SK-N-SH (cell line): ENCODE measurements at regions of chr14 and their contacts with region 1.

Region 1: DNA sequence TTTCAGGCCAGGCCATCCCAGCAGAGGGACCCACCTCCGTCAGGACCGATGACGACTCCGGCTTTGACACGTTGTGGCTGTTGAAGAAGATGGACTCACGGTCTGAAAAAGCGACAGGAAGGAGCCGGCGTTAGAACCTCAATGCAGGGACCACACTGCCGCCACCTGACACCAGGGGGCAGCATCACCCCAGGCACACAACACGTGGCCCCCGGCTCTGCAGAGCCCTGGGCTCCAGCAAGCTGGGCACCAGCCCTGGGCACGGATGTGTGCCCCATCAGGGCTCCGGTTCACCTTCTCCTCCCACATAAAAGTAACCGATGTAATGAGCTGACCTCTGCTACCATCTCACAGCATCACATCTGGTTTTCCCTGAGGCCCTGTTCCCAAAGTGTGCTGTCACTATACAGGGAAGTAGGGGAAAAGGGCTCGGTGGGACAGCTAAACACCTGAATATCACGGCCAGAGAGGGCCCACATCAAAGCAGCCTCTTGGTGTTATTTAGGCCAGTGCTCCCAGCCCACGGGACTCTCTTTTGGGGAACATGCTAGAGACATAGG is 29.0 kb downstream of the CHGA start:
- DNase-seq: peak; percentile 93
- H3K4me3 ChIP-seq: no peak overlapping the region; a peak in 1 of 4 replicates
- H3K27ac ChIP-seq: peak overlapping the region in 1 of 2 experiments; percentile 54; a peak in 1 of 4 replicates
- H3K4me1 ChIP-seq: peaks cover 0 to 49% of the 10 kb centered on the region in 2 experiments; a peak in 1 of 4 replicates
- H3K27me3 ChIP-seq: no peaks in the 10 kb centered on the region
- CTCF ChIP-seq: peak; percentile 92
- EP300 ChIP-seq: no peak
- RAD21 ChIP-seq: peak; percentile 95

Region 2: GRCh38 chr14:92902726-92903125 is 49.3 kb before region 1 on chr14:
- CTCF ChIA-PET with region 1: no interaction called
- POLR2A ChIA-PET with region 1: no interaction called
- DNase-seq: no peak
- H3K4me3 ChIP-seq: no peak overlapping the region
- H3K27ac ChIP-seq: no peak overlapping the region
- H3K4me1 ChIP-seq: peaks cover 0 to 16% of the 10 kb centered on the region in 2 experiments; a peak in 1 of 4 replicates
- H3K27me3 ChIP-seq: no peaks in the 10 kb centered on the region
- CTCF ChIP-seq: no peak
- EP300 ChIP-seq: no peak
- RAD21 ChIP-seq: no peak

Region 3: GRCh38 chr14:92937051-92937937 is 14.7 kb before region 1 on chr14:
- CTCF ChIA-PET with region 1: interaction called, 16 read pairs
- POLR2A ChIA-PET with region 1: interaction called, 57 read pairs
- DNase-seq: no peak
- H3K4me3 ChIP-seq: no peak overlapping the region
- H3K27ac ChIP-seq: peak overlapping the region in 1 of 2 experiments; percentile 60; a peak in 2 of 4 replicates
- H3K4me1 ChIP-seq: peaks cover 0 to 41% of the 10 kb centered on the region in 2 experiments; a peak in 1 of 4 replicates
- H3K27me3 ChIP-seq: no peaks in the 10 kb centered on the region
- CTCF ChIP-seq: no peak
- EP300 ChIP-seq: no peak
- RAD21 ChIP-seq: no peak

Region 4: GRCh38 chr14:93007225-93007997 is 55.4 kb after region 1 on chr14:
- CTCF ChIA-PET with region 1: interaction called, 24 read pairs
- POLR2A ChIA-PET with region 1: interaction called, 5 read pairs
- DNase-seq: no peak
- H3K4me3 ChIP-seq: no peak overlapping the region
- H3K27ac ChIP-seq: peak overlapping the region in 1 of 2 experiments; percentile 98; a peak in 2 of 4 replicates
- H3K4me1 ChIP-seq: peaks cover 19 to 100% of the 10 kb centered on the region in 2 experiments
- H3K27me3 ChIP-seq: no peaks in the 10 kb centered on the region
- CTCF ChIP-seq: no peak
- EP300 ChIP-seq: no peak
- RAD21 ChIP-seq: no peak

Region 5: DNA sequence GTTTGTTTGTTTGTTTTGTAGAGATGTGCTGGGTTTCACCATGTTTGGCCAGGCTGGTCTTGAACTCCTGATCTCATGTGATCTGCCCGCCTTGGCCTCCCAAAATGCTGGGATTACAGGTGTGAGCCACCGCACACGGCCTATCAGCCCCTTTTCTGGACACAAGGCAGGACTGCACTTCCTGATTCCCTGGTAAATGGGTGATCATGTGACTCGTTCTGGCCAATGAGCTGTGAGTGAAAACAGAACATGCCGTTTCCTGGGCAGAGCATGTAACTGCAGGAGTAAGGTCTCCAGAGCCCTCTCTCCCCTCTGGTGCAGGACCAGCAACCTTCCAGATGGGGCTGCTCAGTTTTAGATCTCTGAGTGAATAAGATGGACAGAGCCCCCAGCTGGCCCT is 71.0 kb after region 1 on chr14:
- CTCF ChIA-PET with region 1: interaction called, 12 read pairs
- POLR2A ChIA-PET with region 1: no interaction called
- DNase-seq: peak; percentile 83
- H3K4me3 ChIP-seq: no peak overlapping the region
- H3K27ac ChIP-seq: peak overlapping the region in 1 of 2 experiments; percentile 88; a peak in 2 of 4 replicates
- H3K4me1 ChIP-seq: peaks cover 0 to 54% of the 10 kb centered on the region in 2 experiments; a peak in 1 of 4 replicates
- H3K27me3 ChIP-seq: no peaks in the 10 kb centered on the region
- CTCF ChIP-seq: no peak
- EP300 ChIP-seq: no peak
- RAD21 ChIP-seq: peak; percentile 35; the same call in 1 of the 2 replicates

Region 6: GRCh38 chr14:93132470-93133065 is 180.6 kb after region 1 on chr14:
- CTCF ChIA-PET with region 1: interaction called, 55 read pairs
- POLR2A ChIA-PET with region 1: no interaction called
- DNase-seq: peak; percentile 63
- H3K4me3 ChIP-seq: no peak overlapping the region
- H3K27ac ChIP-seq: no peak overlapping the region
- H3K4me1 ChIP-seq: no peaks in the 10 kb centered on the region; a peak in 1 of 4 replicates
- H3K27me3 ChIP-seq: no peaks in the 10 kb centered on the region
- CTCF ChIP-seq: peak; percentile 54
- EP300 ChIP-seq: no peak
- RAD21 ChIP-seq: peak; percentile 54

Region 7: DNA sequence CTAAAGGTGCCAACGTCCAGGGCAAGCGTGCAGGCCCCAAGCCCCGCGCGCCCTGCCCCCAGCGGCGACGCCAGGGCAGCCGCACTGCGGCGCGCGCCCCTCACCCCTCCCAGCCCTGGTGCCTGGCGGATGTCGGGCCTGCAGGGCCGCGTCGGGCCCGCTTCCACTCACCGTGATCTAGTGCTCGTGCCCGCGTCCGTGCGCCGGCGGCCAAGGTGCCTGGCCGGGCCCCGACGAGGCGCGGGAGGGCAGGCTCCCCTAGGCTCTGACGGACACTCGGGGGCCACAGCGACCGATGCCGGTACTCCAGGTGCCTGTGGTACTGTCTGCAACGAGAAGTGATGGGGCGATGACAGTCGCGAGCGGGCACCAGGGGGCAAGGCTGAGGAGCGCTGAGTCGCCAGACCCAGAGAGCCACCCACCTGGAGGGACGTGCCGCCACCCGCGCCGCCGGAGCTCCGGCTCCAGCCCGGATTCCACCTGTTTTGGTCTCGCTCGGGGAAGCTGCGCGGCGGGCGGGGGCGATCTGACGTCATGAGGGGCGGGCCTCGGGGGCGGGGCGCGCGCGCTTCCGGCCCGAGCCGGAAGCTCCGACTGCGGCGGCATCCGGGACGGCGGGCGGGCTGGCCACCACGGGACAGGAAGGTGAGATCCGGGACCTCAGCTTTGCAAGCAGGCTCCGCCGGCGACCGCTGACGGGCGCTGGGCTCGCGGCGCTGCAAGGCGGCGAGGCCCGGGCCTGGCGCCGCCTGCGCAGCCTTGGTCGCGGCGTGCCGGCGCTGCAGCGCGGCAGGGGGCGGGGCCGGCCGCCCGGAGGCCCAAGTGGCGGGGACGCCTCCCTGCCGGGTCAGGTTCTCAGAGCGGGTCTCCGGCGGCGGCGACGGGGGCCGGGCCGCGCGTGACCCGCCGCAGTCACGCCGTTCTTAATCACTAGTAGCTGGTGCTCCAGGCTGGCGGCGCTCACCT is 232.7 kb after region 1 on chr14 and contains the starts of genes LYSET and MOAP1:
- CTCF ChIA-PET with region 1: interaction called, 13 read pairs
- POLR2A ChIA-PET with region 1: interaction called, 5 read pairs
- DNase-seq: peak; percentile 98
- H3K4me3 ChIP-seq: peak within 1 kb of the TSS; percentile 94 to 99
- H3K27ac ChIP-seq: peak within 1 kb of the TSS; percentile 92 to 94
- H3K4me1 ChIP-seq: peaks cover 2 to 17% of the 10 kb centered on the region in 2 experiments; a peak in 2 of 4 replicates
- H3K27me3 ChIP-seq: no peaks in the 10 kb centered on the region
- CTCF ChIP-seq: peak; percentile 31
- EP300 ChIP-seq: no peak
- RAD21 ChIP-seq: no peak
- polyA plus RNA-seq, gene LYSET: 17.7 and 18.5 TPM in 2 replicates
- polyA plus RNA-seq, gene MOAP1: 25.0 and 42.0 TPM in 2 replicates

Region 8: DNA sequence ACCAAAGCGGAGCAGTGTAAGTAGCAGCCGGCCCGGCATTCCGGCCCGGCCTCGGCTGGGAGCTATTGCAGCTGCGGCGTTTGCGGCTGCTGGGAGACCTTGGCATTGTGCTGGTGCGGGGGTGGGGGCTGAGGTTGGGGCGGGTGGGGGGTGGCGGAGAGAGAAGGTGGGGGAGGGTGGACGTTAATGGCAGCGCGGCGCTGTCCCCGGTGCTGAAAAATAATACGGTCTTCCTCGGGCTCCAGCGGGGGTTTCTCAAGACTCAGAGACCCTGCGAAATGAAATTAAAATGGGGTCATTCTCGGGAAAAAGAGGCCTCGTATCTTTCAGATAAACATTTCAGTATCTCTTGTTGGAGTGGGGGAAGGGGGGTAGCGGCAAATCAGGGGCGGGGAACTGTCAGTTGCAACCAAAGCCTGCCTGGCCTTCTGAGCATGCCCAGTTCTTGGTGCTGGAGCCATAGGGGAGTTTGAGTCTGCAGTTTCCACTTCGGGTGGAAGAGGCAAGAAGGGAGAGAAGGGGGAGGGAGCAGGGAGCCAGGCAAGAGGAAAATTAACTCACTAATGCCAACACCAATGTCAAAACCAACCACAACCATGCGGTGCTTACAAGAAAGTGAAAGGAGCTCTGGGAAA is 479.2 kb after region 1 on chr14:
- CTCF ChIA-PET with region 1: no interaction called
- POLR2A ChIA-PET with region 1: no interaction called
- DNase-seq: peak; percentile 80
- H3K4me3 ChIP-seq: peak overlapping the region; percentile 30 to 48; a peak in 3 of 4 replicates
- H3K27ac ChIP-seq: peak overlapping the region in 1 of 2 experiments; percentile 88; a peak in 2 of 4 replicates
- H3K4me1 ChIP-seq: peaks cover 0 to 4% of the 10 kb centered on the region in 2 experiments; a peak in 2 of 4 replicates
- H3K27me3 ChIP-seq: no peaks in the 10 kb centered on the region
- CTCF ChIP-seq: no peak
- EP300 ChIP-seq: no peak
- RAD21 ChIP-seq: no peak